ENCODE measurements at regions of chr9 and their contacts with region 1.

Region 1: DNA sequence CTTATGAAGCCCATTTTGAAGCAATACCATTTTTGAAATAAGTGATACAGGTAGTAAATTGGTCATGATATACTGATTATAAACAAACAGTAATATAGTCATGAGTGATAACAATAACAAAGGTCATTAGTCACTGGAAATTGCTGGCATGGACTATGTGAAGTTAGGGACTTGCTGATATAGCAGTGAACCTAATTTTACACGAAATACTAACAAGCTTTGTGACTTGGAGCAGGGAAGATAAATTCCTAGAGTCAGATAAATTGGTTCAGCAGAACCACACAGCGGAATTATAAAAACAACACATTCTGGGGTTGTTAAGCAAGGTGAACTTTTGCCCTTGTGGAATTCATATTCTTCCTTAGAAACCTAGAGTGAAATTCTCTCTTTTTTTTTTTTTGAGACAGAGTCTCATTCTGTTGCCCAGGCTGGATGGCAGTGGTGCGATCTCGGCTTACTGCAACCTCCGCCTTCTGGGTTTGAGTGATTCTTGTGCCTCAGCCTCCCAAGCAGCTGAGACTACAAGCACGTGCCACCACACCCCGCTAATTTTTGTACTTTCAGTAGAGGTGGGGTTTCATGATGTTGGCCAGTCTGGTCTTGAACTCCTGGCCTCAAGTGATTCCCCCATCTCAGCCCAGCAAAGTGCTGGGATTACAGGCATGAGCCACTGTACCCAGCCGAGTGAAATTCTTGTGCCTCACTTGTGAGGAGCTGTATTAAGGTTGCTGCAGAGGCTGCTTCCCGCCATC is 6.0 kb downstream of the UGCG start:
- DNase-seq: no peak
- H3K4me3 ChIP-seq: no peak overlapping the region
- H3K4me3 Mint-ChIP-seq: no peak overlapping the region
- H3K27ac ChIP-seq: no peak overlapping the region
- H3K27ac Mint-ChIP-seq: no peak overlapping the region
- H3K4me1 ChIP-seq: peaks cover 13 to 16% of the 10 kb centered on the region in 2 donors
- H3K4me1 Mint-ChIP-seq: peaks cover 5% of the 10 kb centered on the region
- H3K27me3 ChIP-seq: no peaks in the 10 kb centered on the region
- H3K27me3 Mint-ChIP-seq: peaks cover 0 to 2% (median 0%) of the 10 kb centered on the region in 3 donors
- CTCF ChIP-seq: no peak

Region 2: DNA sequence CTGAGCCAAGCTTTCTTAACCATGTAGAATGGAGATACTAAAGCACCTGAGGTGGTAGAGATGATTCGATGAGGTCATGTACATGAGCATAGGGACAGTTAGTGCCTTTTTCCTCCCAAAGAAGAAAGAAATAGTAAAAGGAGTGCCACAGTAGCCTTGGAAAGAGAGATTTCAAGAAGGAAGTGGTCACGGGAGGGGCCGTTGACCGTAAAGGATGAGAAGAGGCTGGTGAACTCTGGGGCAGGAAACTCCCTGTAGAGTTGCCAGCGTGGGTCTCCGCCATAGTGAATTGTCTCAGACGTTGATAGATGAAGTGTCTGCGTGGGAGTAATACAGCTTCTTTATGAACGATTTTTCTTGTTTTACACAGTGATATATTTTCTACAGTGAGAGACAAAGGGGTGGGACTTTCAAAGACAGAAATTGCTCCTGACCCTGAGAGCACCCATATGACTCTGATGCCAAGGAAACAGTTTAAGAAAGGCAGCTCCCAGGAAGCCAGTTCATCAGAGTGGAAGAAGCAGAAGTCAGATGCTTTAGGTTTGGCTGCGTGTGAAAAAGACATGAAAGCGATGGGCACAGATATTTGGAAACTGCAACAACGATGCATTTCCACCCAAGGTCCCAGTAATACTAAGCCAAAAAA is 35.3 kb after region 1 on chr9:
- intact Hi-C with region 1: loop called in 1 of 2 experiments (anchors 5 kb)
- DNase-seq: peak; percentile 32 to 69 (median 46)
- H3K4me3 ChIP-seq: peak overlapping the region in 2 of 3 experiments; percentile 27 to 43
- H3K4me3 Mint-ChIP-seq: peak overlapping the region; percentile 61 to 88
- H3K27ac ChIP-seq: peak overlapping the region; percentile 55 to 61
- H3K27ac Mint-ChIP-seq: peak overlapping the region; percentile 36 to 93 (median 87)
- H3K4me1 ChIP-seq: peaks cover 18 to 22% of the 10 kb centered on the region in 2 donors
- H3K4me1 Mint-ChIP-seq: peaks cover 22% of the 10 kb centered on the region
- H3K27me3 ChIP-seq: no peaks in the 10 kb centered on the region
- H3K27me3 Mint-ChIP-seq: no peaks in the 10 kb centered on the region
- CTCF ChIP-seq: no peak

Measured in CD14-positive monocyte (primary cell).